ENCODE measurements at regions of chr2 and their contacts with region 1.

Region 1: DNA sequence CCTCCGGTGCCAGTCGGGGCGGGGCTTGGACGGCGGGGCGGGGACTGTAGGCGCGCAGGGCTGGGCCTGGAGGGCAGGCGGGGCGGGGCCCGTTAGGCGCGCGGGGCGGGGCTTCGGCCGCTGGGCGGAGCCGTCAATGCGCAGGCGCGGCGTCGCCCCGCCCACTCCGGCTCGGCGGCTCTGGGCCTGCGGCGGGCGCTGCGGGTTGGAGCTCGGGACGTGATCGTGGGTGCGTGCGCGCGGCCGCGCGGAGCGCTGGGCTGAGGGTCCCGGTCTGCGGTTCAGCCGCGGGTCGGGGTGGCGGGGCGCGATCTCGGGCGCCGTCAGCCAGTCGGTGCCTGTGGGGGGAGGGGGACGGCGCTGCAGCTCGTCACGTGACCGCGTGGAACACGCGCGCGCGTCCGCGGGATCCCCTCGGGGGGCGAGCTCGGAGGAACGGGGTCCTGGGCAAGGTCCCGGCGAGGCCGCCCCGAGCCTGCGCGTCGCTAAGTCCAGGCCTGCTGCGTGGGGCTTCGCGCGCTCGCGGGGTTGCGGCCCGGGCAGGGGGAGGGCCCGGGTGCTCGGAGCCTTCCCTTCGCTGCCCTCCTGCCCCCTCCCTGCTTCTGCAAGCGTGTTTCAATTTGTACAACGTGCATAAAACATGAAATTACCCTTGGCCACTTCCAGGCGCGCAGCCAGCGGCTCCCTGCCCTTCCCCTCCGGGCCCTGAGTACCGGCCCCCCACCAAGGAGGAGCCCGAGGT is at the start of gene D2HGDH:
- DNase-seq: peak; percentile 89
- H3K4me3 Mint-ChIP-seq: peak within 1 kb of the TSS; percentile 82
- H3K27ac Mint-ChIP-seq: no peak within 1 kb of the TSS
- H3K4me1 Mint-ChIP-seq: peaks cover 41% of the 10 kb centered on the region
- H3K27me3 Mint-ChIP-seq: peaks cover 3% of the 10 kb centered on the region
- total RNA-seq, gene D2HGDH: 27.1 and 28.7 TPM in 2 replicates

Region 2: GRCh38 chr2:240851078-240851991 is 883.3 kb before region 1 on chr2:
- intact Hi-C with region 1: loop called (anchors 5 kb)
- DNase-seq: peak; percentile 65
- H3K4me3 Mint-ChIP-seq: no peak overlapping the region
- H3K27ac Mint-ChIP-seq: no peak overlapping the region
- H3K4me1 Mint-ChIP-seq: no peaks in the 10 kb centered on the region
- H3K27me3 Mint-ChIP-seq: no peaks in the 10 kb centered on the region

Region 3: DNA sequence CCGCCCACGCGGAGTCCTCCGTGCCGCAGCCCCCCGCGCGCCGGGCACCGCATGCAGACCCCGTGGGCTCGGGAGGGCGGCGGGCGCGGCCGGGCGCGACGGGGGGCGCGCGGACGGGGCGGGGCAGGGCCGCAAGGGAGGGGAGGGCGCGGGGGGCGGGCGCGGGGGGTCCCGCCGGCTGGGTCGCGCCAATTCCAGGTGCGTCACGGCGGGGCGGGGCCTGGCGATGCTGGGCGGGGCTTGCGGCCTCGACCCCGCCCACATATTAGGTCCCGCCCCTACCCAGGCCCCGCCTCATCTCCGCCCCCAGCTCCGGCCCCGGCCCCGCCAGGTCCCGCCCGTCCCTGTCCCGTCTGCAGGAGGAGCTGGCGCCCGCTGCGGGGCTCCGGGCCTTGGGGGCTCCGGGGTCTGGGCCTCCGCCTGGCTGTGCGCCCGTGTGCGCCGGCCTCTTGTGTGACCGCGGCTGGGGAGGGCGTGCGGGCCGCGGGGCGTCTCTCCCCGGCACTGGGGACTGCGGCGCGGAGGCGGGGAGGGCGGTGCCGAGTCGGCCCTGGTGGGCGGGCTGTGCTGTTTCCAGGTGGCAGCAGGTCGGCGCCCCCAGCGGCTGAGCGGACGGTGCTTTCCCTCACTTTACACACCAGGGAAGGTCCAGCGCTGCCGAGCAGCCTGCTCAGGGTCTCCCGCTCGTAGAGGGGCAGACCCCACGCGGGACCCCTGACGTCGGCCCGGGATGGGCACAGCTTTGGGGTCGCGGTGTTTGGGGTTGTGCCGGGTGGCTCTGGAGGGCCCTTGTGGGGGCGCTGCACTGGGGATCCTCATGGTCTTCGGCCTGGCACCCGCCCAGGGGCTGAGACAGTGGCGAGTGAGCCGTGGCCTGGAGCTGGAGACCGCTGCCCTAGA is 32.3 kb before region 1 on chr2:
- intact Hi-C with region 1: loop called (anchors 1 kb)
- DNase-seq: peak; percentile 82
- H3K4me3 Mint-ChIP-seq: peak overlapping the region; percentile 78
- H3K27ac Mint-ChIP-seq: peak overlapping the region; percentile 53
- H3K4me1 Mint-ChIP-seq: peaks cover 20% of the 10 kb centered on the region
- H3K27me3 Mint-ChIP-seq: no peaks in the 10 kb centered on the region

Region 4: DNA sequence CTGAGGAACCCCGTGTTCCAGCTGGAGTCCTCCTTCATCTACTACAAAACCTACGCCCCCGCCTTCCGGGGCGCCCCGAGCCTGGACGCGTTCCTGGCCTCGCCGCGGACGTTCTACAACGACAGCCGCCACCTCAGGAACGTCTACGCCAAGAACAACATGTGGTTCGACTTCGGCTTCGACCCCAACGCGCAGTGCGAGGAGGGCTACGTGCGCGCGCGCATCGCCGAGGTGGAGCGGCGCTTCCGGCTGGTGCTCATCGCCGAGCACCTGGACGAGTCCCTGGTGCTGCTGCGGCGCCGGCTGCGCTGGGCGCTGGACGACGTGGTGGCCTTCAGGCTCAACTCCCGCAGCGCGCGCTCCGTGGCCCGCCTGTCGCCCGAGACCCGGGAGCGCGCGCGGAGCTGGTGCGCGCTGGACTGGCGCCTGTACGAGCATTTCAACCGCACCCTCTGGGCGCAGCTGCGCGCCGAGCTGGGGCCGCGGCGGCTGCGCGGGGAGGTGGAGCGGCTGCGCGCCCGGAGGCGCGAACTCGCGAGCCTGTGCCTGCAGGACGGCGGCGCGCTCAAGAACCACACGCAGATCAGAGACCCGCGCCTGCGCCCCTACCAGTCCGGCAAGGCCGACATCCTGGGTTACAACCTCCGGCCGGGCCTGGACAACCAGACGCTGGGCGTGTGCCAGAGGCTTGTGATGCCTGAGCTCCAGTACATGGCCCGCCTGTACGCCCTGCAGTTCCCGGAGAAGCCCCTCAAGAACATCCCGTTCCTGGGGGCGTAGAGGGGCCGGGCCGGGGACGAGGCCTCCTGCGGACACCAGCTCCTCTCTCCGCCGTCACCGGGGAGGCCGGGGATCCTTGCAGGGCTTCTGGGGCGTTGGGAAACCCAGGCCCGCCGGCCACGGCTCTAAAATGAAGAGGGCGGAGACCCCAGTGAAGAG is 69.0 kb after region 1 on chr2:
- intact Hi-C with region 1: loop called (anchors 2 kb)
- DNase-seq: peak; percentile 33
- H3K4me3 Mint-ChIP-seq: peak overlapping the region; percentile 56
- H3K27ac Mint-ChIP-seq: peak overlapping the region; percentile 29
- H3K4me1 Mint-ChIP-seq: peaks cover 4% of the 10 kb centered on the region
- H3K27me3 Mint-ChIP-seq: peaks cover 9% of the 10 kb centered on the region

Measured in activated T-helper 1 cell treated with anti-CD3 and anti-CD28 coated beads, Interleukin-12 subunit alpha, Interleukin-12 subunit beta, Interleukin-2, Interleukin-4 antibody, amounts not matched to agents 30 ng/mL and 10 ng/mL and 1 ng/mL, durations not matched to agents 14 hours and 24 hours and 36 hours (primary cell).